AG04450 (cell line): ENCODE measurements at regions of chr22 and their contacts with region 1.

Region 1: DNA sequence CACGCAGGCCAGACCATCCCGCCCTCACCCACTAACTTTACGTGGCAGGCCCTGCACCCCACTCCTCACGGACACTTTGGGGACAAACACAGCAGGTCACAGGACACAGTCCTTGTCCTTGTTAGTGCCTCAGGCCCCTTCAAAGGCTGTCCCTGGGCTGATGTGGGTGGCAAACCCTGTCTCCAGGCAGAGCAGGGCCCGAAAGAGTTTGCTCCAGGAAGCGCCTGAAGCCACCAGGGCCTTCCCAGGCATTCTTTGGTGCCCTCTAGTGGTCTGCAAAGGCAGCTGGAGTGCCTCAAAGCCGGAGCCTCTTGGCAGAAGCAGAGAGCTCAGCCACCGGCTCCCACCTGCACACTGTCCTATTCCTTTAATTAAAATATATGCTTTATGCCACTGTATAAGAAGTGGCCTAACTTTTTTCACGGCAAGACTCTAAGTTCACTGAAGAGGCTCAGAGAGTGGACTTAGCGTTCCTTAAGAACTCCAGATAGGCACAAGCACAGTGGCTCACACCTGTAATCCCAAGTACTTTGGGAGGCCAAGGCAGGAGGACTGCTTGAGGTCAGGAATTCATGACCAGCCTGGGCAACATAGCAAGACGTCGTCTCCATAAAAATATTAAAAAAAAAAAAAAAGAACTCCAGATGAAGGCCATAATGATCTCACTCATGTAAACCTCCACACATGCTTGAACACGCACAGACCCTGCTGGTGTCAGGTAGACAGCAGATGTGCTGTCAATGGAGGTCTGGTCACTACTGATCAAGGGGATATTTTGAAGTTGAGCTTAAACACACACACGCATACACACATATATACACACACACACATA is 11.1 kb downstream of the TXN2 start:
- DNase-seq: peak; percentile 83
- H3K4me3 ChIP-seq: no peak overlapping the region
- H3K27ac ChIP-seq: peak overlapping the region; percentile 89
- H3K27me3 ChIP-seq: no peaks in the 10 kb centered on the region
- CTCF ChIP-seq: peak; percentile 98

Region 2: DNA sequence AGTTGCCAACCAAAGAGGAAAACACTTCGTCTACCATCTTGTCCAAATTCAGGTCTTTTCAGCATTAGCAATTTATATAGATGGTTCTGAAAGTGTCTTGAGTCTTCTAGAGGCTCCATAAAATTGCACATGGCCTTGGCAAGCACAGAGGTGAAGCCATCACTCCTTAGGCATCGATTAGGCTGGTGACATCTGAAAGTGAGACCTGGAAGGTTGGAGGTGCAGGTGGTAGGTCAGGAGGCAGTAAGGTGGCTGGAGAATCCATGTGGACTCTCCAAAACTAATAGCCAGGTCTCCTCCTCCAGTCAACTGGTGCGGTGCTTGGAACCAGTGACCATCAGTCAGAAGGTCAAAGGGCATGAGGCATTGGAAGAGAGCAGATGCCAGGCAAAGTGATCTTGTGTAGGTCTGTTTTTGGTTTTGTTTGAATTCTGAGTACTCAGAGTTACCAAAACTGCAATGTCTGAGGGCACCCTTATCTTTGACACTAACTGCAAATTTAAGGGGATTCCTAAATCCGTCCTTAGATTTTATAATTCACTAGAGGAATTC is 224.5 kb before region 1 on chr22:
- CTCF ChIA-PET with region 1: no interaction called
- POLR2A ChIA-PET with region 1: no interaction called
- DNase-seq: no peak
- H3K4me3 ChIP-seq: no peak overlapping the region
- H3K27ac ChIP-seq: no peak overlapping the region
- H3K27me3 ChIP-seq: no peaks in the 10 kb centered on the region
- CTCF ChIP-seq: no peak

Region 3: GRCh38 chr22:36325154-36326031 is 145.0 kb before region 1 on chr22:
- CTCF ChIA-PET with region 1: interaction called, 25 read pairs
- POLR2A ChIA-PET with region 1: interaction called, 5 read pairs
- DNase-seq: no peak
- H3K4me3 ChIP-seq: no peak overlapping the region
- H3K27ac ChIP-seq: peak overlapping the region; percentile 100
- H3K27me3 ChIP-seq: no peaks in the 10 kb centered on the region
- CTCF ChIP-seq: no peak

Region 4: GRCh38 chr22:36359181-36359996 is 111.0 kb before region 1 on chr22:
- CTCF ChIA-PET with region 1: interaction called, 12 read pairs
- POLR2A ChIA-PET with region 1: interaction called, 7 read pairs
- DNase-seq: no peak
- H3K4me3 ChIP-seq: no peak overlapping the region
- H3K27ac ChIP-seq: peak overlapping the region; percentile 57
- H3K27me3 ChIP-seq: no peaks in the 10 kb centered on the region
- CTCF ChIP-seq: no peak

Region 5: GRCh38 chr22:36387752-36388518 is 82.4 kb before region 1 on chr22 and contains the start of gene MYH9:
- CTCF ChIA-PET with region 1: interaction called, 4 read pairs
- POLR2A ChIA-PET with region 1: interaction called, 88 read pairs
- DNase-seq: peak; percentile 100
- H3K4me3 ChIP-seq: peak within 1 kb of the TSS; percentile 96
- H3K27ac ChIP-seq: peak within 1 kb of the TSS; percentile 85
- H3K27me3 ChIP-seq: no peaks in the 10 kb centered on the region
- CTCF ChIP-seq: no peak
- polyA plus RNA-seq, gene MYH9: 338 and 432 TPM in 2 replicates

Region 6: DNA sequence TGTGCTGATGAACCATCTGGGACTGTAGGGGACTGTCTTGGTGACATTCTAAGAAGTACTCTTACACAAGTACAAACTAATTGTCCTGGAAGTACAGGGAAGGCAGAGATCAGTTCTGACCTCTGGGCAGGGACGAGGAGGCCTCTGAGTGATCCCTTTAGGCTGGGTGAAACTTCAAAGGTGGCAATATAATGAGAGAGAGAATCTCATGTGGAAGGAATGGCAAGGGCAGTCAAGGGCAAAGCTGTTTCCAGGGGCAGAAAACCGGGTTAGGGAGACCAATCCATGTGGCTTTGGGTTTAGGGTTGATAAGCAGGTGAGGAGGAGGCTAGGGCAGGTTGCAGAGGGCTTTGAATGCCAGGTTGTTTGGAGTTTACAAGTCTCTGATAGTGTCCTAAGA is 61.3 kb before region 1 on chr22:
- CTCF ChIA-PET with region 1: no interaction called
- POLR2A ChIA-PET with region 1: no interaction called
- DNase-seq: no peak
- H3K4me3 ChIP-seq: no peak overlapping the region
- H3K27ac ChIP-seq: no peak overlapping the region
- H3K27me3 ChIP-seq: no peaks in the 10 kb centered on the region
- CTCF ChIP-seq: no peak